ENCODE measurements at regions of chr21 and their contacts with region 1.

Region 1: DNA sequence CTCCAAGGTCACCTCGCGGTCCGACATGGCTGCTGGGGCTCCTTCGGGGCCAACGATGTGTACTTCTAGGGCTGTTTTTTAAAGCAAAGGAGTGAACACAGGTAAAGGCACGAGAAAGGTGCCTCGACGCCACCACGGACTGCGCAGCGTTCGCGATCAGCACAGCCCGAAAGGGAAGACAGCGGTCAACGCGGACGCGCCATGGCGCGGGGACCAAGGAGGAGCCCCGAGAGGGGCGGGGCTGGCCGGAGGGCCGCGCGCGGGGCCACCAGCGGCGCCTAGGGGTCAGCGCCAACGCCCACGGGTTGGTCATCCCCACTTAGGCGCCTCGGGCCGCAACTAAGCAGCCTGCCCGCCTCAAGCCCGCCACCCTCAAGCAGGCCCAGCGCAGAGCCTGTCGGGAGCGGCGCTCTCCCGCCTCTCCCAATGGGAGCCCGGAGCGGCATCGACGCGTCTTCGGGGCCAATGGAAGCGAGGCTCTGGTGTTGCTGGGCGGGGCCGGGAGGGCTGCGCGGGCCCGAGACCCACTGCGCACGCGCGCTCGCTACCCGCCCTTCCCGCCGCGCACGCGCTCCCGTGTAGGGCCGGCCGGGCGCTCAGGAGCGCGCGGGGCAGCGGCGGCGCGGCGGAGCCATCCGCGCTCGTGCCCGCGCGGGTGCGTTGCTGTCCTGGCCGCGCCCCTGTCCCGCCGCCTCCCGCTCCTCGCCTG is at the start of gene DIP2A:
- DNase-seq: peak; percentile 85 to 99 (median 93)
- ATAC-seq: peak; percentile 97
- H3K4me3 ChIP-seq: peak within 1 kb of the TSS; percentile 89
- H3K4me3 Mint-ChIP-seq: peak within 1 kb of the TSS; percentile 94
- H3K27ac ChIP-seq: peak within 1 kb of the TSS; percentile 78 to 86
- H3K27ac Mint-ChIP-seq: peak within 1 kb of the TSS; percentile 93
- H3K4me1 ChIP-seq: peaks cover 35% of the 10 kb centered on the region
- H3K4me1 Mint-ChIP-seq: peaks cover 63% of the 10 kb centered on the region
- H3K27me3 ChIP-seq: no peaks in the 10 kb centered on the region
- H3K27me3 Mint-ChIP-seq: no peaks in the 10 kb centered on the region
- CTCF ChIP-seq: no peak
- total RNA-seq, gene DIP2A: 61.2 to 66.1 TPM

Region 2: GRCh38 chr21:46285761-46286496 is 172.5 kb before region 1 on chr21 and contains the start of gene YBEY:
- CTCF ChIA-PET with region 1: no interaction called
- POLR2A ChIA-PET with region 1: no interaction called
- intact Hi-C with region 1: loop called in 1 of 2 experiments (anchors 1 kb)
- DNase-seq: peak; percentile 68 to 92 (median 82)
- ATAC-seq: peak; percentile 80
- H3K4me3 ChIP-seq: peak within 1 kb of the TSS; percentile 84
- H3K4me3 Mint-ChIP-seq: peak within 1 kb of the TSS; percentile 98
- H3K27ac ChIP-seq: peak within 1 kb of the TSS; percentile 72 to 84
- H3K27ac Mint-ChIP-seq: peak within 1 kb of the TSS; percentile 86
- H3K4me1 ChIP-seq: peaks cover 49% of the 10 kb centered on the region
- H3K4me1 Mint-ChIP-seq: peaks cover 54% of the 10 kb centered on the region
- H3K27me3 ChIP-seq: no peaks in the 10 kb centered on the region
- H3K27me3 Mint-ChIP-seq: no peaks in the 10 kb centered on the region
- CTCF ChIP-seq: peak; percentile 41
- total RNA-seq, gene YBEY: 10.6 to 14.8 TPM

Region 3: GRCh38 chr21:46472246-46472645 is 13.8 kb after region 1 on chr21:
- CTCF ChIA-PET with region 1: interaction called, 3 read pairs
- POLR2A ChIA-PET with region 1: interaction called, 10 read pairs
- intact Hi-C with region 1: no loop called
- DNase-seq: no peak
- ATAC-seq: peak; percentile 39
- H3K4me3 ChIP-seq: no peak overlapping the region
- H3K4me3 Mint-ChIP-seq: no peak overlapping the region
- H3K27ac ChIP-seq: no peak overlapping the region
- H3K27ac Mint-ChIP-seq: peak overlapping the region; percentile 25
- H3K4me1 ChIP-seq: peaks cover 11% of the 10 kb centered on the region
- H3K4me1 Mint-ChIP-seq: peaks cover 63% of the 10 kb centered on the region
- H3K27me3 ChIP-seq: no peaks in the 10 kb centered on the region
- H3K27me3 Mint-ChIP-seq: no peaks in the 10 kb centered on the region
- CTCF ChIP-seq: no peak

Region 4: GRCh38 chr21:46598581-46599572 is 140.4 kb after region 1 on chr21:
- CTCF ChIA-PET with region 1: no interaction called
- POLR2A ChIA-PET with region 1: no interaction called
- intact Hi-C with region 1: no loop called
- DNase-seq: no peak
- ATAC-seq: no peak
- H3K4me3 ChIP-seq: no peak overlapping the region
- H3K4me3 Mint-ChIP-seq: no peak overlapping the region
- H3K27ac ChIP-seq: no peak overlapping the region
- H3K27ac Mint-ChIP-seq: no peak overlapping the region
- H3K4me1 ChIP-seq: peaks cover 12% of the 10 kb centered on the region
- H3K4me1 Mint-ChIP-seq: peaks cover 23% of the 10 kb centered on the region
- H3K27me3 ChIP-seq: no peaks in the 10 kb centered on the region
- H3K27me3 Mint-ChIP-seq: no peaks in the 10 kb centered on the region
- CTCF ChIP-seq: no peak